ENCODE measurements at regions of chr7 and their contacts with region 1.

Region 1: DNA sequence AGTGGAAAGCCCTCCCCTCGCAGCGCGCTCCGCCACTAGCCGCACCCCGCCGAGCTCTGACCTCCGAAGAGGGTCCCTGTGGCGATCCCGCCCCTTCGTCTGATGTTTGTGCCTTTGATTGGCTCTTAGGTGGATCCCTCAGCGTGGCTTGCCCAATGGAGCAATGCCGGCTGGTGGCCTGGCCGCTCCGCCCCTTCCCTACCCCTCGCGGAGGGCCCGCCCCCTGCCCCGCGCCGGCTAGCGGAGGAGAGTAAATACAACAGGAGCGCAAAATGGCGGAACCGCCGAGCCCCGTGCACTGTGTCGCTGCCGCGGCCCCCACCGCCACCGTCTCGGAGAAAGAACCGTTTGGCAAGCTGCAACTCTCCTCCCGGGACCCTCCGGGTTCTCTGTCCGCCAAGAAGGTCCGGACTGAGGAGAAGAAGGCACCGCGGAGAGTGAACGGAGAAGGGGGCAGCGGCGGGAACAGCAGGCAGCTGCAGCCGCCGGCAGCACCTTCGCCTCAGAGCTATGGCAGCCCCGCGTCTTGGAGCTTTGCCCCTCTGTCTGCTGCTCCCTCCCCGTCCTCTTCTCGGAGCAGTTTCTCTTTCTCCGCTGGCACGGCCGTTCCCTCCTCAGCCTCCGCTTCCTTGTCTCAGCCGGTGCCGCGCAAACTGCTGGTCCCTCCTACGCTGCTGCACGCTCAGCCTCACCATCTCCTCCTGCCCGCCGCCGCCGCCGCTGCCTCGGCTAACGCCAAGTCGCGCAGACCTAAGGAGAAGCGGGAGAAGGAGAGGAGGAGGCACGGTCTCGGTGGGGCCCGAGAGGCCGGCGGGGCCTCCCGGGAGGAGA is at the start of gene RSBN1L:
- DNase-seq: peak; percentile 100
- H3K4me3 Mint-ChIP-seq: peak within 1 kb of the TSS; percentile 93
- H3K27ac Mint-ChIP-seq: peak within 1 kb of the TSS; percentile 98
- H3K4me1 Mint-ChIP-seq: peaks cover 36% of the 10 kb centered on the region
- H3K27me3 Mint-ChIP-seq: no peaks in the 10 kb centered on the region
- total RNA-seq, gene RSBN1L: 26.3 and 31.3 TPM in 2 replicates

Region 2: GRCh38 chr7:77536413-77537135 is 159.8 kb before region 1 on chr7:
- intact Hi-C with region 1: loop called (anchors 1 kb)
- DNase-seq: peak; percentile 98
- H3K4me3 Mint-ChIP-seq: peak overlapping the region; percentile 98
- H3K27ac Mint-ChIP-seq: peak overlapping the region; percentile 94
- H3K4me1 Mint-ChIP-seq: peaks cover 12% of the 10 kb centered on the region
- H3K27me3 Mint-ChIP-seq: no peaks in the 10 kb centered on the region

Region 3: GRCh38 chr7:77657427-77658224 is 38.8 kb before region 1 on chr7:
- intact Hi-C with region 1: loop called (anchors 1 kb)
- DNase-seq: peak; percentile 78
- H3K4me3 Mint-ChIP-seq: no peak overlapping the region
- H3K27ac Mint-ChIP-seq: no peak overlapping the region
- H3K4me1 Mint-ChIP-seq: no peaks in the 10 kb centered on the region
- H3K27me3 Mint-ChIP-seq: no peaks in the 10 kb centered on the region

Region 4: GRCh38 chr7:77674878-77675277 is 21.5 kb before region 1 on chr7:
- intact Hi-C with region 1: no loop called
- DNase-seq: no peak
- H3K4me3 Mint-ChIP-seq: no peak overlapping the region
- H3K27ac Mint-ChIP-seq: no peak overlapping the region
- H3K4me1 Mint-ChIP-seq: no peaks in the 10 kb centered on the region
- H3K27me3 Mint-ChIP-seq: no peaks in the 10 kb centered on the region

Region 5: DNA sequence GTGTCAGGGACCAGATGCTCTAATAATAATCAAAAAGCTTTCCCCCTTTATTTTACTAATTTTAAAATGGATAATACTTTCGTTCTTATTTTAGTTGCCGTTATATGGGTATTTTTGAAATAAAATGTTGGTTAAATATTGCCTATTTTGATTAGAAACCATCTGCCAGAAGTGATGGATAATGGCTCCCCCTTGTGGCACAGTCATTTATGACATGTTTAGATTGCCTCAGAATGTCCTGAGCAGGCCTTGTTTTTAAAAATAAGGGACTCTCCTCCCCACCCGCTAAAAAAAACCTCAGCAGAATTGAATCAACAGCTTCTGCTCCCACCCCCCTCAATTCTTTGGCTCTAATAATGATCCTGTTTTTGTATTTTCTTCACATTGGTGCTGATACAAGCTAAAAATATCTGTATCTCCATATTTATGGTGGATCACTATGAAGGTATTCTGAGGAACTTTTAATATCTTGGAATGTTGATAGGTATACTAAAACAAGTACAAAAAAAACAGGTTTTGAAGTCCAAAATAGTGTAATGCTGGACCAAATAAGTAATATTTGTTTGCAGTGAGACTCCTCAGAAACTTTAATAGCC is 63.0 kb after region 1 on chr7:
- intact Hi-C with region 1: loop called (anchors 1 kb)
- DNase-seq: peak; percentile 92
- H3K4me3 Mint-ChIP-seq: no peak overlapping the region
- H3K27ac Mint-ChIP-seq: no peak overlapping the region
- H3K4me1 Mint-ChIP-seq: peaks cover 12% of the 10 kb centered on the region
- H3K27me3 Mint-ChIP-seq: no peaks in the 10 kb centered on the region

Region 6: DNA sequence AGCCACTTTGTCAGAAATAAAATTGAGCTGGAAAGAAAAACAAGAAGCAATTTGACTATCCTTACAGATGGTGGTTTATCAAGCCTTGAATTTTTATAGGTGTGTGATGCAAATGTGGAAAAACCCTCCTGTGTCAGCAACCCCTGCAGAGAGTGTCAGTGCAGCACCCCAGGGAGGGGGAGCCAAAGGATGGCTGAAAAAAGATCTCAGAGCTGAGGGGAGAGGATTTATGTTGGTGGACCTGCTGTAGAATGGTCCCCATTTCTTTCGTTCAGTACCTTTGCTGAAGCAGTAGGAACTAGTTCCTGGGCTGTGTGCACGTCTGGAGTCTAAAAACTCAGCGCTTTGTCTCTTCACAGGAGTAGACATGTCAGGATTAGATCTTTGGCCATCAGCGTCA is 341.2 kb after region 1 on chr7:
- intact Hi-C with region 1: no loop called
- DNase-seq: no peak
- H3K4me3 Mint-ChIP-seq: no peak overlapping the region
- H3K27ac Mint-ChIP-seq: no peak overlapping the region
- H3K4me1 Mint-ChIP-seq: no peaks in the 10 kb centered on the region
- H3K27me3 Mint-ChIP-seq: peaks cover 20% of the 10 kb centered on the region